PC-9 (cell line): ENCODE measurements at regions of chr13 and their contacts with region 1.

Region 1: GRCh38 chr13:26596458-26596857 is 39.0 kb downstream of the WASF3 start:
- DNase-seq: no peak
- H3K4me3 ChIP-seq: no peak overlapping the region
- H3K27ac ChIP-seq: no peak overlapping the region
- H3K4me1 ChIP-seq: no peaks in the 10 kb centered on the region
- H3K27me3 ChIP-seq: no peaks in the 10 kb centered on the region
- CTCF ChIP-seq: no peak

Region 2: GRCh38 chr13:25659091-25659790 is 937.2 kb before region 1 on chr13:
- CTCF ChIA-PET with region 1: no interaction called
- POLR2A ChIA-PET with region 1: no interaction called
- intact Hi-C with region 1: no loop called
- DNase-seq: no peak
- H3K4me3 ChIP-seq: no peak overlapping the region
- H3K27ac ChIP-seq: no peak overlapping the region
- H3K4me1 ChIP-seq: no peaks in the 10 kb centered on the region
- H3K27me3 ChIP-seq: peaks cover 60% of the 10 kb centered on the region
- CTCF ChIP-seq: no peak

Region 3: GRCh38 chr13:26370553-26370952 is 225.9 kb before region 1 on chr13:
- CTCF ChIA-PET with region 1: no interaction called
- POLR2A ChIA-PET with region 1: no interaction called
- intact Hi-C with region 1: no loop called
- DNase-seq: no peak
- H3K4me3 ChIP-seq: no peak overlapping the region
- H3K27ac ChIP-seq: no peak overlapping the region
- H3K4me1 ChIP-seq: no peaks in the 10 kb centered on the region
- H3K27me3 ChIP-seq: no peaks in the 10 kb centered on the region
- CTCF ChIP-seq: no peak

Region 4: DNA sequence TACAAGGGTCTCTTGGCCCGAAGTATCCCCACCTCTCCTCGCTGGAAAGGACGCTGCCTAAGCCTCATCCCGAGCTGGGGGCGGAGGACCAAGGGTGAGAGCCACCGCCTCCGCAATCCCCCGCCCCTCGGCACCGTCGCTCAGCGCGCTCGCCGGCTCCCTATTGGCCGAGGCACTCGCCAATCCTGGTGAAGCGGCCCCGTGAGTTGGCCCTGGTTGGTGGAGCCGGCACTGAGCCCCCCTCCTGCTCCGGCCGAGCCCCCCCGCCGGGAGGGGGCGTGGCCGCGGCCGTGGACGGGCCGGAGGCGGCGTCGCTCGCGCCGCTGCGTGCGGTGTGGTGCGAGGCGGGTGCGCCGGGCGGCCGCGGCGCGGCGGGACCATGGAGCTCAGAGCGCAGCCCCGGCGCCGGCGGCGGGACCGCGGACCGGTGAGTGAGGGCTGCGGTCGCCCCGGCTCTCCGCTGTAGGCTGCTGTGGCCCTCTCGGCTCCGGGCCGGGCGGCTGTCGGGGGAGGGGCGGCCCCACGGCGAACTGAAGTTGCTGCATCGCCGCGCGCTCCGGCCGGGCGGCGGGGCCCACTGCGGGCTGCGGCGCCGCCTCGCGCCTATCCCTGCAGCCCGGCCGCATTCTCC is 39.0 kb before region 1 on chr13 and contains the start of gene WASF3:
- CTCF ChIA-PET with region 1: no interaction called
- POLR2A ChIA-PET with region 1: interaction called, 11 read pairs
- intact Hi-C with region 1: no loop called
- DNase-seq: peak; percentile 64 to 67
- H3K4me3 ChIP-seq: peak within 1 kb of the TSS; percentile 49; the same call in 1 of the 2 replicates
- H3K27ac ChIP-seq: no peak within 1 kb of the TSS
- H3K4me1 ChIP-seq: no peaks in the 10 kb centered on the region
- H3K27me3 ChIP-seq: peaks cover 62% of the 10 kb centered on the region
- CTCF ChIP-seq: no peak
- total RNA-seq, gene WASF3: 0.20 and 0.31 TPM in 2 replicates